K562 (cell line): ENCODE measurements at regions of chr17 and their contacts with region 1.

Region 1: DNA sequence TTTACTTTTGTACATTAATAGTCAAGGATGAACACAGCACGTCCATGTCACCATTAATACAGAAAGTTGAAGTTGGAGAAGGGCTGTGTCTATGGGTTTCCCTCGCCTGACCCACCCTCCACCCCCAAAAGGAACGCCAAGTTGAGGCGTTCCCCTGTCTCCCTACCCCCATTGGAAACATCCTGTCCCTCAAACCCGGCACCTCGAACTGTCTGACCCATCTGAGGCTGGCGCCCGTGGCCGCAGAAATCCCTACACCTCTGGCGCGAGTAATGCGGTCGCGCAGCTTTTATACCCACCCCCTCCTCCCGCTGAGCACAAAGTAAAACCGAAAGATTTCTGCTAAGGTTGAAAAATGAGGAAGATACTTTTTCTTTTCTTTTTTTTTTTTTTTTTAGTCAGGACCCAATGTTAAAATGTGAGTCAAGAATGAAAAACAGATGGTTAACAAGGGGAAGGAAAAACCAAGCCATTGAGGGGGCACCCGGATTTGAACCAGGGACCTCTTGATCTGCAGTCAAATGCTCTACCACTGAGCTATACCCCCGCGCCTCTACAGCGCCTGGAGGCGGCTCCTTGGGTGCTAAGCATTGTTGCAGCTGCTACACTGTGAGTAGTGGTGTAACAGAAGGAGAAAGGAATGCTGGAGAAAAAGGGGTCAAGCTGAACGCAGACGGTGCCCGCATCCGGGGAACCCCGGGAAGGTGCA is 887 bp upstream of the LASP1 start:
- DNase-seq: peak; percentile 62 to 90 (median 67)
- ATAC-seq: peak; percentile 69
- H3K4me3 ChIP-seq: peak overlapping the region; percentile 97
- H3K27ac ChIP-seq: peak overlapping the region; percentile 88
- H3K4me1 ChIP-seq: peaks cover 19 to 42% of the 10 kb centered on the region in 2 experiments
- H3K27me3 ChIP-seq: no peaks in the 10 kb centered on the region
- CTCF ChIP-seq: peak; percentile 63 to 67 (median 64)
- EP300 ChIP-seq: 0 out of 2 replicates have a peak, but pooled peaks have one; percentile 45
- POLR2A ChIP-seq: no peak
- RAD21 ChIP-seq: no peak

Region 2: DNA sequence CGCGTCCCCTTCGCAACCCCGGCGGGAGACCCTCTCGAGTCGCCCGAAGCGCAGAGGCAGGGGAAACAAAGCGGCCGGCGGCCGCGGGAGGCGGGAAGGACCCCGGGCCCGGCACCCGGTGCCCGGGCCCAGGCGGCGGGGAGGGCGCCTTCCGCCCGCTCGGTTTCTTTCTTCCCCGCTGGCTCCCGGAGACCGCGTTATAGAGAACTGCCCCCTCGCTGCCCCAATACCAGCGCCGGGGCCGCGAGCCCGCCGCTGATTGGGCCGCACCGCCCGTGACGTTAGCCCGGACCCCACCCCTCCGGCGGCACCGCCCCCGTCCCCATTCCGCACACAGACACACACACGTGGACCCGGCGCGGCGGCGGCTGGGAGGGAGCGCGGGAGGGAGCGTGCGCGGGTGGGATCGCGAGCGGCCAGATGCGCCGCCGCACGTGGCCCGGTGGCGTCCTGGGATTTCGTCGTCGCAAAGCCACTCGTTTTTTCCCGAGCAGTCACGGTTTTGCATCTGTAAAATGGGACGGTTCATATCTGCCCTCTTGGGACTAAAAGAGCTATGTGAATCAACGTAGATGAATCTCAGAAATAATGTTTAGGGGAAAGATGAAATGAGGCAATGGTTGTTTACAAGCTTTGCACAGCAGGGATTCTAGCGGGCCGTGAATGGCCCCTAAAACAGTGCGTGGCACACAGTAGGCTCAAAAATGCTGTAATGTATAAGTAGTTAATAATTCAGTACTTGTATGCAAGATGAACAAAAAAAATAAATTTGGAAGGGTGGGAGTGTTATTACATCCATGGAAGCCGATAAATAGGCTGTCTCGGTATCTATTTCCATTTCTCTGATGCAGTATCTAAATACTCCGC is 194.0 kb before region 1 on chr17 and contains the start of gene EPOP:
- CTCF ChIA-PET with region 1: interaction called, 3 read pairs
- POLR2A ChIA-PET with region 1: interaction called, 3 read pairs
- in situ Hi-C with region 1: no loop called
- intact Hi-C with region 1: loop called (anchors 10 kb)
- DNase-seq: peak; percentile 94 to 98 (median 98)
- ATAC-seq: peak; percentile 92
- H3K4me3 ChIP-seq: peak within 1 kb of the TSS; percentile 56
- H3K27ac ChIP-seq: peak within 1 kb of the TSS; percentile 74
- H3K4me1 ChIP-seq: peaks cover 20 to 30% of the 10 kb centered on the region in 2 experiments
- H3K27me3 ChIP-seq: peaks cover 0 to 6% of the 10 kb centered on the region in 2 experiments; a peak in 2 of 5 replicates
- CTCF ChIP-seq: no peak
- EP300 ChIP-seq: no peak
- POLR2A ChIP-seq: peak; percentile 65
- RAD21 ChIP-seq: no peak
- polyA plus RNA-seq, gene EPOP: 0.41 to 0.62 TPM

Region 3: GRCh38 chr17:38853292-38854219 is 15.4 kb before region 1 on chr17 and contains the start of gene RPL23:
- CTCF ChIA-PET with region 1: no interaction called
- POLR2A ChIA-PET with region 1: interaction called, 70 read pairs
- in situ Hi-C with region 1: no loop called
- intact Hi-C with region 1: no loop called
- DNase-seq: peak; percentile 85 to 99 (median 90)
- ATAC-seq: peak; percentile 87
- H3K4me3 ChIP-seq: peak within 1 kb of the TSS; percentile 82
- H3K27ac ChIP-seq: peak within 1 kb of the TSS; percentile 93
- H3K4me1 ChIP-seq: peaks cover 5 to 18% of the 10 kb centered on the region in 2 experiments
- H3K27me3 ChIP-seq: no peaks in the 10 kb centered on the region
- CTCF ChIP-seq: no peak
- EP300 ChIP-seq: peak; percentile 70; the same call in 1 of the 2 replicates
- POLR2A ChIP-seq: peak; percentile 99
- RAD21 ChIP-seq: no peak
- polyA plus RNA-seq, gene RPL23: 2,598 to 3,667 TPM

Region 4: DNA sequence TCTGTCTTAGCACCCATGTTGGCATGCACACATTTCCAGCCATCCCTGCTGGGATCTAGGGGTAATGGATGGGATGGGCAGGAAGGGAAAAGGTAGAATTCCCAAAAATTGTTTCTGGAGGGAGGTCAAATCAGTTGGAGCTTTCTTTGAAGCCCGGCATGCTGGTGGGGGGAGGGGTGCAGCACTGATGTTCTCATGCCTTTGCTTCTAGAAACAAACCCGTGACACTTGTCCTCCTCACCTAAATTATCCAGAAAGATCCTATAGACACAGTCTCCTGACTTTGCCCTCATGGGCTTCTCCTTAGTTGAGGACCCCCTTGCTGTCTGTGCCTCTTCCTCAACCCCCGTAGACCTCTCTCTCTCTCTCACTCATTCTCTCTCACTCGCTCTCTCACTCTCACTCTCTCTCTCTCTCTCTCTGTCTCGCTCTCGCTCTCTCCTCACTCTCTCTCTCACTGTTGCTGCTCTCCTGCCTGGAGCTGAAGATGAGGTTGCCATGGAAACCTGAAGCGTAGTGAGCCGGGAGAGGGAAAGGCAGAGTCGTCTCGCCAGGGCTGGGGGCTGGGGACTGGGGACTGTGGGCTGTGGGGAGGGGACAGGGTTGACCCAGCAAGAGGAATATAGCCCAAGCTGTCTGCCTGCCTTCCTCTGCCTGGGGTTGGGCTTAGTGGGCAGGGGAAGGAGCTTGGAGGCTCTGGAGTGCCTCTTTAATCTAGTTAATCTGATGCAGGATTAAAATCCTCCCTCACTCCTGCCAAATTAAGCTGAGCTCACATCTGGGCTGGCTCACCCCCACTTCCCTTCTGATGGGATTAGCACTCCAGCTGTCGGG is 17.0 kb after region 1 on chr17:
- CTCF ChIA-PET with region 1: no interaction called
- POLR2A ChIA-PET with region 1: interaction called, 24 read pairs
- in situ Hi-C with region 1: no loop called
- intact Hi-C with region 1: no loop called
- DNase-seq: no peak
- ATAC-seq: no peak
- H3K4me3 ChIP-seq: no peak overlapping the region
- H3K27ac ChIP-seq: no peak overlapping the region
- H3K4me1 ChIP-seq: peaks cover 9 to 17% of the 10 kb centered on the region in 2 experiments; a peak in 4 of 5 replicates
- H3K27me3 ChIP-seq: no peaks in the 10 kb centered on the region
- CTCF ChIP-seq: no peak
- EP300 ChIP-seq: no peak
- POLR2A ChIP-seq: no peak
- RAD21 ChIP-seq: no peak

Region 5: DNA sequence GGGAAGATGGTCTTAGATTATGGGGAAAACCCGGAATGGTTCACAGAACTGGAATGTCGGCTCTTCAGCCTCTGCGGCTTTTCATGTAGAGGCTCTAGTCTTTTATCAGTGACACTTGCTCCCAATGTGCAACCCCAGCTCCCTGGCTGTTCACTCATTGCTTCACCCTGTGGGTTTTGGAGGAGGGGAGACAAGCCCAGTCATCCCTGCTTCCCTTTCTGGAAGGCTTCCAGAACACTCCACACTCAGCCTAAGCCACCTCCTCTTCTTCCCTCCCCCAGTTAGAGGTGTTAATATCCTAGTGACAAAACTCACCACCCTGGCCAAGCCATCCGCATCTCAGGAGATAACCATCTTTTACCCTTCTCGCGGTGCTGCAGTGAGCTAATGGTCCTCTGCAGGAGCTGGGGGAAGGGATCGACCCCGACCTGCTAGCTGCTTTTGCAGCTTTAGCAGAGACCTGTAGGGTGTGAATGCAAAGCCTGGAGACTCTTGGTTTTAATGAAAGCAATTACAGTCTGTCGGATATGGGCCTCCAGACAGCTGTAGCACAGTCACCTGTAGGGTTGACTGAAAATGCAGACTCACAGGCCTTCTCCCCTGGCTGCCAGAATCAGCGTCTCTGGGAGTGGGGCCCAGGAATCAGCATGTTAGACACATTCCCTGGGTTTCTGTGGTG is 32.1 kb after region 1 on chr17:
- CTCF ChIA-PET with region 1: interaction called, 3 read pairs
- POLR2A ChIA-PET with region 1: interaction called, 8 read pairs
- in situ Hi-C with region 1: no loop called
- intact Hi-C with region 1: loop called (anchors 2 kb)
- DNase-seq: peak; percentile 71 to 90 (median 82)
- ATAC-seq: peak; percentile 87
- H3K4me3 ChIP-seq: no peak overlapping the region
- H3K27ac ChIP-seq: peak overlapping the region; percentile 66; the same call in 2 of the 3 replicates
- H3K4me1 ChIP-seq: peaks cover 38 to 42% of the 10 kb centered on the region in 2 experiments
- H3K27me3 ChIP-seq: no peaks in the 10 kb centered on the region
- CTCF ChIP-seq: no peak
- EP300 ChIP-seq: no peak; the same call in 1 of the 2 replicates
- POLR2A ChIP-seq: no peak
- RAD21 ChIP-seq: peak in 1 of 2 experiments; percentile 13; a peak in 1 of 4 replicates

Region 6: GRCh38 chr17:38982858-38983746 is 114.1 kb after region 1 on chr17:
- CTCF ChIA-PET with region 1: no interaction called
- POLR2A ChIA-PET with region 1: interaction called, 3 read pairs
- in situ Hi-C with region 1: no loop called
- intact Hi-C with region 1: loop called (anchors 5 kb)
- DNase-seq: peak; percentile 42 to 79 (median 58)
- ATAC-seq: peak; percentile 86
- H3K4me3 ChIP-seq: no peak overlapping the region
- H3K27ac ChIP-seq: no peak overlapping the region
- H3K4me1 ChIP-seq: no peaks in the 10 kb centered on the region; a peak in 1 of 5 replicates
- H3K27me3 ChIP-seq: no peaks in the 10 kb centered on the region; a peak in 1 of 5 replicates
- CTCF ChIP-seq: peak; percentile 77 to 95 (median 83)
- EP300 ChIP-seq: no peak
- POLR2A ChIP-seq: no peak
- RAD21 ChIP-seq: peak; percentile 95 to 98